Body of pancreas (tissue), 4 donors: ENCODE measurements at regions of chr17 and their contacts with region 1.

Region 1: DNA sequence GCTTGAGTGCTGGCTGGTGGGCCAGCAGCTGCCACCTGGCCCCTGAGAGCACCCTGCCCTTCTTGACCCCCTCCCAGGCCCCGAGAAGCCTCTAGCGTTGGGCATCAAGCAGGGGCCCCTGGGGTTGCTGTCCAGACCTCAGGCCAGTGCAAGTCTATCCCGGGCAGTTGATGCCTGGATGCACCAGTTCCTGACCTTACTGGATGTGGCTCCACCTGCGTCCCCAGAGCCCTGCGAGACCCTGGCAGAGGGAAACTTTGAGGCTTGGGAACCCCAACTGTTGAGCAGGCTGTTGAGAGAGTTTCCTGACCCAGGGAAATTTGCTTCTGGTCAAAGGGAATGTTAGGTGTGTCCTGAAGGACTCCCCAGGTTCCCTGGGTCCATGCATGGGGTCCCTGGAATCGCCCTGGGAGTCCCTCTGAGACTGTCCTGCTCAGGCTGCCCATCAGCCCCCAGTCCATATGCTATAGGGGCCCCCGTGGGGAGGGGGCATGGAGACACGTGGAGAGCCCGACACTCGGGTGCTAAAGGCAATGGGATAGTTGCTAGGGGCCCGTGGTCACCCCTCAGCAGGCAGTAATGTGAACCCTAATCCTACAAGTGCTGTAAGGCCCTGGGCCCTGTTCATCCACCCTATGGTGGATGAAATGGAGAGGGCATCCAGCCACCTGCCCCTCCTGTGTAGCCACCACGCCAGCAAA is 46.4 kb downstream of the RAB11FIP4 start:
- DNase-seq: no peak
- ATAC-seq: no peak
- H3K4me3 ChIP-seq: no peak overlapping the region
- H3K27ac ChIP-seq: no peak overlapping the region
- H3K4me1 ChIP-seq: peaks cover 19% of the 10 kb centered on the region
- H3K27me3 ChIP-seq: no peaks in the 10 kb centered on the region
- CTCF ChIP-seq: no peak
- POLR2A ChIP-seq: no peak

Region 2: DNA sequence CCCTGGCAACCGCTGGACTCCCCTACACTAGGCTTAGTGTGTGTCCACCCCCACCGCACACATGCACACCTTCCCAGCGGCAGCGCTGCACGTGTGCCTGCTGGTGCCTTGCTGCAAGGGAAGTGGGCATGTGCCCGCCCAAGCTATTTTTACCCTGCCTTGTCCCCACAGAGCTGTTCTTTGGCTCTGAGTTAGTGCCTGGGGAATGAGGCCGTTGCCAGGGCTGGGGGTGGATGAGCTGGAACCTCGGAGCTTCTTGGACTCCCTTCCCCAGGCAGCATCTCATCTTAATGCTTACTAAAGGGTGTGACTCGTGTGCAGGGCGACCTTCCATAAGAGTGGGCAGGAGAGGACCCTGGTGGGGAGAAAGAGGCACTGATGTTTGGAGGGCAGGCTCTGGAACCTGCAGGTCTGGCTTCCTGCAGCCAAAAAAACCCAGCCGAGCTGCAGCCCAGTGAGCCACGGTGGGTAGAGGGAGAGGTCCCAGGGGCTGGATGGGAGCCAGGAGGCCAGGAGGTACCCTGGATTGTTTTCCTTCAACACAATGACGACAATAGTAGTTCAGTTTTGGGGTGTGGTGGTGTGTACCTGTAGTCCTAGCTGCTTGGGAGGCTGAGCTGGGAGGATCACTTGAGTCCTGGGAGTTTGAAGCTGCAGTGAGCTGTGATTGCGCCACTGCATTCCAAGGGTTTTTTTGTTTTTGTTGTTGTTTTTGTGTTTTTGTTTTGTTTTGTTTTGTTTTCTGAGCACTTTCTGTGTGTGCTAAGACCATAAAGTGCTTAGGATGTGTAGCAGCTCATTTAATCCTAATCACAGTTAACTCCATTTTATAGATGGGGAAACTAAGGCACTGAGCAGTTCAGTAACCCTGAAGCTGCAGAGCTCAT is 72.7 kb after region 1 on chr17:
- intact Hi-C with region 1: no loop called
- DNase-seq: peak in 3 of 4 donors; percentile 40 to 65 (median 61)
- ATAC-seq: peak; percentile 29
- H3K4me3 ChIP-seq: no peak overlapping the region
- H3K27ac ChIP-seq: peak overlapping the region in 2 of 4 donors; percentile 5 to 13
- H3K4me1 ChIP-seq: peaks cover 42% of the 10 kb centered on the region
- H3K27me3 ChIP-seq: no peaks in the 10 kb centered on the region
- CTCF ChIP-seq: no peak
- POLR2A ChIP-seq: no peak

Region 3: GRCh38 chr17:31524926-31525800 is 87.3 kb after region 1 on chr17:
- intact Hi-C with region 1: loop called (anchors 5 kb)
- DNase-seq: peak; percentile 89 to 95 (median 92)
- ATAC-seq: peak; percentile 89
- H3K4me3 ChIP-seq: no peak overlapping the region
- H3K27ac ChIP-seq: peak overlapping the region in 2 of 4 donors; percentile 1 to 49
- H3K4me1 ChIP-seq: no peaks in the 10 kb centered on the region
- H3K27me3 ChIP-seq: no peaks in the 10 kb centered on the region
- CTCF ChIP-seq: peak; percentile 68 to 97 (median 96)
- POLR2A ChIP-seq: no peak